Testis (tissue), 5 donors: ENCODE measurements at regions of chr17 and their contacts with region 1.

Region 1: GRCh38 chr17:75405365-75406221 is at the start of gene GRB2:
- DNase-seq: peak; percentile 98
- H3K4me3 ChIP-seq: peak within 1 kb of the TSS; percentile 71 to 97
- H3K27ac ChIP-seq: peak within 1 kb of the TSS; percentile 87 to 88
- H3K4me1 ChIP-seq: peaks cover 11% of the 10 kb centered on the region
- H3K27me3 ChIP-seq: no peaks in the 10 kb centered on the region
- CTCF ChIP-seq: peak in 1 of 3 experiments; percentile 5
- POLR2A ChIP-seq: peak; percentile 42
- total RNA-seq, gene GRB2: 61.8 to 78.9 TPM

Region 2: GRCh38 chr17:75319904-75320691 is 85.5 kb before region 1 on chr17:
- intact Hi-C with region 1: loop called (anchors 5 kb)
- DNase-seq: no peak
- H3K4me3 ChIP-seq: no peak overlapping the region
- H3K27ac ChIP-seq: no peak overlapping the region
- H3K4me1 ChIP-seq: no peaks in the 10 kb centered on the region
- H3K27me3 ChIP-seq: no peaks in the 10 kb centered on the region
- CTCF ChIP-seq: no peak
- POLR2A ChIP-seq: no peak